PC-9 (cell line): ENCODE measurements at regions of chr1 and their contacts with region 1.

Region 1: GRCh38 chr1:164558461-164559341 is at the start of gene PBX1:
- DNase-seq: peak; percentile 94 to 96
- H3K4me3 ChIP-seq: peak within 1 kb of the TSS; percentile 71
- H3K27ac ChIP-seq: peak within 1 kb of the TSS; percentile 74
- H3K4me1 ChIP-seq: peaks cover 40% of the 10 kb centered on the region
- H3K27me3 ChIP-seq: no peaks in the 10 kb centered on the region
- CTCF ChIP-seq: no peak
- total RNA-seq, gene PBX1: 44.5 and 57.7 TPM in 2 replicates

Region 2: DNA sequence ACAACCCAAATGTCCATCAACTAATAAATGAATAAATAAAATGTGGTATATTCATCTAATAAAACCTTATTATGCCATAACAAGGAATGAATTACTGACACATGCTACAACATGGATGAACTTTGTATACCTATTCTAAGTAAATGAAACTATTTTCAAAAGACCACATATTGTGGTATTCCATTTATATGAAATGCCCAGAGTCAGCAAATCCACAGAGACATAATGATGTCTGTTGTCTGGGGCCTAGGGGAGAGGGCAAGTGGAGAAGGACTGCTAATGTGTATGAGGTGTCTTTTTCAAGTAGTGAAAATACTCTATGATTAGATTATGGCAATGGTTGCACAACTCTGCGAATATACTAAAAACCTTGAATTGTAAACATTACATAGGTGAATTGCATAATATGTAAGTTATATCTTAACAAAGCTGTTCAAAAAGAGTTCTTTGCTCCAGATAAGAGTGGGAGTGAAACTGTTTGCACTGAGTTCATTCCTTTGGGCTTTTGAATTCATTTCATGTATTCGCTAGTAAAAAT is 772.8 kb before region 1 on chr1:
- CTCF ChIA-PET with region 1: no interaction called
- POLR2A ChIA-PET with region 1: no interaction called
- intact Hi-C with region 1: no loop called
- DNase-seq: no peak
- H3K4me3 ChIP-seq: no peak overlapping the region
- H3K27ac ChIP-seq: no peak overlapping the region
- H3K4me1 ChIP-seq: no peaks in the 10 kb centered on the region
- H3K27me3 ChIP-seq: no peaks in the 10 kb centered on the region
- CTCF ChIP-seq: no peak

Region 3: GRCh38 chr1:164163289-164163864 is 395.3 kb before region 1 on chr1:
- CTCF ChIA-PET with region 1: no interaction called
- POLR2A ChIA-PET with region 1: no interaction called
- intact Hi-C with region 1: loop called (anchors 2 kb)
- DNase-seq: no peak
- H3K4me3 ChIP-seq: no peak overlapping the region
- H3K27ac ChIP-seq: no peak overlapping the region
- H3K4me1 ChIP-seq: no peaks in the 10 kb centered on the region
- H3K27me3 ChIP-seq: no peaks in the 10 kb centered on the region
- CTCF ChIP-seq: no peak

Region 4: DNA sequence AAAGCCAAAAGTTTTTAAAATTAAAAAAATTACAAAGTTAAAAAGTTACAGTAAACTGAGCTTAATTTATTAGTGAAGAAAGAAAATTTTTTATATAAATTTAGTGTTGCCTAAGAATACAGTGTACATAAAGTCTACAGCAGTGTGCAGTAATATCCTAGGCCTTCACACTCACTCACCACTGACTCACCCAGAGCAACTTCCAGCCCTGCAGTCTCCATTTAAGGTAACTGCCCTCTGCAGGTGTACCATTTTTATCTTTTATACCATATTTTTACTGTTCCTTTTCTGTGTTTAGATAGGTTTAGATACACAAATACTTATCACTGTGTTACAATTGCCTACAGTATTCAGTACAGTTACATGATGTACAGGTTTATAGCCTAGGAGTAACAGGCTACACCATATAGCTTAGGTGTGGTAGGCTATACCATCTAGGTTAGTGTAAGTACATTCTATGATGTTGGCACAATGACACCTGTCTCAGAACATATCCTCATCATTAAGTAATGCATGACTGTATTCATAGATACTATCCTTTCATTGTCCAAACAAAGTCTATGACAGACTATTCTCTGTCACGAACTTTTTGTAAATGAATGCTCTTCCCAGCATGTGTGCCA is 78.3 kb before region 1 on chr1:
- CTCF ChIA-PET with region 1: no interaction called
- POLR2A ChIA-PET with region 1: no interaction called
- intact Hi-C with region 1: no loop called
- DNase-seq: no peak
- H3K4me3 ChIP-seq: no peak overlapping the region
- H3K27ac ChIP-seq: no peak overlapping the region
- H3K4me1 ChIP-seq: no peaks in the 10 kb centered on the region
- H3K27me3 ChIP-seq: no peaks in the 10 kb centered on the region
- CTCF ChIP-seq: no peak

Region 5: GRCh38 chr1:164534863-164535610 is 23.7 kb before region 1 on chr1:
- CTCF ChIA-PET with region 1: interaction called, 3 read pairs
- POLR2A ChIA-PET with region 1: interaction called, 15 read pairs
- intact Hi-C with region 1: no loop called
- DNase-seq: no peak
- H3K4me3 ChIP-seq: no peak overlapping the region
- H3K27ac ChIP-seq: no peak overlapping the region
- H3K4me1 ChIP-seq: no peaks in the 10 kb centered on the region
- H3K27me3 ChIP-seq: no peaks in the 10 kb centered on the region
- CTCF ChIP-seq: no peak

Region 6: GRCh38 chr1:164602480-164603093 is 43.9 kb after region 1 on chr1:
- CTCF ChIA-PET with region 1: interaction called, 5 read pairs
- POLR2A ChIA-PET with region 1: interaction called, 15 read pairs
- intact Hi-C with region 1: loop called (anchors 1 kb)
- DNase-seq: peak; percentile 65 to 83
- H3K4me3 ChIP-seq: peak overlapping the region; percentile 49
- H3K27ac ChIP-seq: peak overlapping the region; percentile 95
- H3K4me1 ChIP-seq: peaks cover 69% of the 10 kb centered on the region
- H3K27me3 ChIP-seq: no peaks in the 10 kb centered on the region
- CTCF ChIP-seq: no peak

Region 7: GRCh38 chr1:164617377-164618201 is 58.9 kb after region 1 on chr1:
- CTCF ChIA-PET with region 1: no interaction called
- POLR2A ChIA-PET with region 1: interaction called, 11 read pairs
- intact Hi-C with region 1: loop called (anchors 2 kb)
- DNase-seq: no peak
- H3K4me3 ChIP-seq: no peak overlapping the region
- H3K27ac ChIP-seq: no peak overlapping the region
- H3K4me1 ChIP-seq: peaks cover 32% of the 10 kb centered on the region
- H3K27me3 ChIP-seq: no peaks in the 10 kb centered on the region
- CTCF ChIP-seq: peak; percentile 62

Region 8: GRCh38 chr1:164660412-164660772 is 101.7 kb after region 1 on chr1:
- CTCF ChIA-PET with region 1: no interaction called
- POLR2A ChIA-PET with region 1: no interaction called
- intact Hi-C with region 1: loop called (anchors 1 kb)
- DNase-seq: no peak
- H3K4me3 ChIP-seq: peak overlapping the region; percentile 39; the same call in 1 of the 2 replicates
- H3K27ac ChIP-seq: peak overlapping the region; percentile 99
- H3K4me1 ChIP-seq: peaks cover 81% of the 10 kb centered on the region
- H3K27me3 ChIP-seq: no peaks in the 10 kb centered on the region
- CTCF ChIP-seq: peak; percentile 33; the same call in 1 of the 2 replicates

Region 9: DNA sequence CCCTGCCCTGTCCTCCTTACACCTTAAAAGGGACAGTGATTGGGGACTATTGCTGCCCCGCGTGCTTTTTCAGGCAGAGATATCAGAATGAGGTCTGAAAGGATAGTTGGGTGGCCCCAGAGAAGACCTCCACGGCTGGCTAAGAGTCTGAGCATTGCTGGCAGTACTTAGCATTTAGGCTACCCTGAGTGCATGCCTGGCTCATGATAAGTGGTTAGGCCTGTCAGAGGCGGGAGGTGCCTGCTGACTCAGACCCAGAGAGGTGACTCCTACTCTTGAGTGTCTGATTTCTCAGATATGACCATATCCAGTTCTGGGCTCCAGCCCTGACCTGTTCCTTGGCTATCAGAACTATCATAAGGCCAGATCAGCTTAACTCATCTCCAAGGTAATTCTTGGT is 213.9 kb after region 1 on chr1:
- CTCF ChIA-PET with region 1: no interaction called
- POLR2A ChIA-PET with region 1: interaction called, 4 read pairs
- intact Hi-C with region 1: loop called (anchors 5 kb)
- DNase-seq: peak; percentile 84 to 96
- H3K4me3 ChIP-seq: peak overlapping the region; percentile 25; the same call in 1 of the 2 replicates
- H3K27ac ChIP-seq: peak overlapping the region; percentile 98
- H3K4me1 ChIP-seq: peaks cover 80% of the 10 kb centered on the region
- H3K27me3 ChIP-seq: no peaks in the 10 kb centered on the region
- CTCF ChIP-seq: no peak